Posterior vena cava (tissue), 2 donors: ENCODE measurements at regions of chr5 and their contacts with region 1.

Region 1: GRCh38 chr5:88785391-88786219 is 97.4 kb downstream of the MEF2C start:
- DNase-seq: no peak

Region 2: DNA sequence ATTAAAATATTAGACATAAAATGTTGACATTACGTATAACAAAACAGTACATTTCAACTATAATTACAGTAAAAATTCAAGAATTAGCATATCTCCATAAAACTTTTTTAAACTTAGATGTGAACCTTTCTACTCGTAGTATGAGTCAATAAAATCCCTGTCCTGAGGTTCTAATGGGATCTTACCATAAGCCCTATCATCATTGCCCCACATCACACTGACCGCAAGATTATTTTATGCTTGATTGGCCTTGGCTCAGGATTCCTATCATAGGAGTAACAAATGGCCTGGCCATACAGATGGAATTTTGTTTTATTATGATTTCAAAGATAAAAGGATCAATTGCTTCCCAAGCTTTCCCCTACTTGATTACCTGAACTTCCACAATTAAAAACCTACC is 140.9 kb before region 1 on chr5:
- intact Hi-C with region 1: no loop called
- DNase-seq: no peak

Region 3: DNA sequence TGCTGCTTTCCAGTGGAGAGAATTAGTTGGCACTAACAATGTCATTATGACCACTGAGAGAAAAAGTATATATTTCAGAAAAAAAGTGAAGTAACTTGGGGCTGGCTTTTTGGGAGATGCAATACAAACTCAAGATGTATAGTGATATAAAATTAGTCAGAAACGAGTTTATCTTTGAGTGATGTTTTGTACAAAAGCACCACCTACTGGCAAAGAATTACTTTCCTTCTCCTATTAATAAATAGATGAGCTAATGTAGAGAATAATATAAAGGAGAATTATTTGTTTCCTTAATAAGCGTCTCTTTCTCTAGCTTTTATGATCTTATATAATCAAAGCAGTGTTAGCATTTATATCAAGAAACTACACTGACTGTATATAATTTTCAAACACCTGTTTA is 61.4 kb before region 1 on chr5:
- intact Hi-C with region 1: no loop called
- DNase-seq: no peak

Region 4: DNA sequence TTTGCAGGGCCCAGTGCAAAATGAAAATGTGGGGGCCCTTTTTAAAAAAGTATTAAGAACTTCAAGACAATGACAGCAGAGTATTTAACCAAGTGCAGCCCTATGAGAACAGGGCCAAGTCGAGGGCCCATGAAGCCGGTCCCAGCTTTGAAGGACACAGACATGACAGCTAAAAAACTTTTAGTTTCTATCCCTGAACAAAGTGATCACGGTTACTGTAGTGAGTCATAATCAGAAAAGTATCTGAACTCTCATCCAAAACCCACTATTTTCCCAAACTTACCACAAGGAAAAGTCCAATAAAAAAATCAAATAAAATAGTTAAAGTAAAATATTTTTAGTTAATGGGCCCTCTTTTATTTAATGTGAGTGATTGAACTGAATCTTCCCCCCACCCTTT is 28.7 kb before region 1 on chr5:
- intact Hi-C with region 1: loop called in 1 of 2 experiments (anchors 1 kb)
- DNase-seq: no peak

Region 5: DNA sequence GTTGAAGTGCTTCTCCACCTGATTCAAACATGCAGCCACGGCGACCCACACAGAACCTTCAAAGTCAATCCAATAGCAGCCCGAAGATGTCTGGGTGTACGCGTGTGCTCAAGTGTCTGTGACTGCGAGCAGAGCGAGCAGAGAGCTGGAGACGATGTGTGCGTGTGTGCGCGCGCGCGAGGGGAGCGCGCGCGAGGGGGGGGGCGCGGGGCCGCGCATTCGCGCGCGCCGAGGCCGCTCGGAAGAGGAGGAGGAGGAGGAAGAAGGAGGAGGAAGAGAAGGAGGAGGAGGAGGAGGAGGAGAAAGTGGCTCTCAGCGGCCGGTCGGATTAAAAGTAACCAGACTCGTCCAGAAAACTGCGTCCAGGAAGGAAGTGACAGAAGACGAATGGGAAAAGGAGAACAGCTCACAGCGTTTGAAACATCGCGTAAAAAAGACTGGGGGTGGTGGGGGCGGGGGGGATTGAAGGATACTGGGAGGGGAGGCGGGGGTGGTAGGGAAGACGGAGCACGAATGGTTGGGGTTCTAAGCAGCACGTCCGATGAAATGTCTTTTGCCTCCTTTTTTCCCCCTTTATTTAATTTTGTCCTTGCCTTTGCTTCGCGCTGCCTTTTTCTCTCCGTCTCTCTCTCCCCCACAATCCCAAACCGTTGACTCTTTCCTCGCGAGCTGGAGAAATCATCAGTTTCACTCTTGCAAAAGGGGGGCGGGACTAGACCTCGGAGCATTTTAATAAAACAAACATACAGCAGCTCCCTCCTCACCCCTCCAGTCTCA is 97.6 kb after region 1 on chr5 and contains the start of gene MEF2C:
- intact Hi-C with region 1: loop called in 1 of 2 experiments (anchors 5 kb)
- DNase-seq: peak; percentile 93
- total RNA-seq, gene MEF2C: 86.7 to 94.1 TPM